ENCODE measurements at regions of chr13 and their contacts with region 1.

Region 1: GRCh38 chr13:41652727-41653361 is 195.5 kb downstream of the RGCC start:
- DNase-seq: no peak
- ATAC-seq: peak in 1 of 2 donors; percentile 60

Region 2: DNA sequence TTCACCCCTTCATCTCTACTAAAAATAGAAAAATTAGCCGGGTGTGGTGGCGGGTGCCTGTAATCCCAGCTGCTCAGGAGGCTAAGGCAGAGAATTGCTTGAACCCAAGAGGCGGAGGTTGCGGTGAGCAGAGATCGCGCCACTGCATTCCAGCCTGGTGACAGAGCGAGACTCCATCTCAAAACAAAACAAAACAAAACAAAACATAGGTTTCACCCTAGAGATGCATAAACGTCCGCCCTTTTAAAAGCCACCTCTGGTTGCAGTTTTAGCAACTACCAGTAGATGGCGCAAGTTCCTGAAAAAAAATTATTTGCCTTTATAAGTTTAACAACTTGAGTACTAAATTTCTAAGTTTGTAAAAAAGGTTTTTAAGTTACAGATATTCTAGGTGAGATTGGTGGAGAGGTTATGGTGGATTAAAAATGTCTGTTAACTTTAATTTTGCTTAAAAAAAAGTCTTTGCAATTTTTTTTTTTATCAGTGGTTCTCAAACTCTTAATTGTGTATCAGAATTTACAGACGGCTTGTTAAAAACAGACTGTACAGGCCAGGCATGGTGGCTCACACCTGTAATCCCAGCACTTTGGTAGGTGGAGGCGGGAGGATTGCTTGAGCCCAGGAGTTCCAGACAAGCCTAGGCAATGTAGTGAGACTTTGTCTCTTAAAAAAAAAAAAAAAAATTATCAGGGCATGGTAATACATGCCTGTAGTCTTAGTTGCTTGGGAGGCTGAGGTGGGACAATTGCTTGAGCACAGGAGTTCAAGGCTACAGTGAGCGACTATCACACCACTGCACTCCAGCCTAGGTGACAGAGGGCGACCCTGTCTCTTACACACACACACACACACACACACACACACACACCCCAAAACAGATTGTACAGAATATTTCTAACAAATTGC is 299.7 kb before region 1 on chr13:
- intact Hi-C with region 1: loop called in 1 of 2 experiments (anchors 10 kb)
- DNase-seq: no peak
- ATAC-seq: peak; percentile 36 to 37

Region 3: DNA sequence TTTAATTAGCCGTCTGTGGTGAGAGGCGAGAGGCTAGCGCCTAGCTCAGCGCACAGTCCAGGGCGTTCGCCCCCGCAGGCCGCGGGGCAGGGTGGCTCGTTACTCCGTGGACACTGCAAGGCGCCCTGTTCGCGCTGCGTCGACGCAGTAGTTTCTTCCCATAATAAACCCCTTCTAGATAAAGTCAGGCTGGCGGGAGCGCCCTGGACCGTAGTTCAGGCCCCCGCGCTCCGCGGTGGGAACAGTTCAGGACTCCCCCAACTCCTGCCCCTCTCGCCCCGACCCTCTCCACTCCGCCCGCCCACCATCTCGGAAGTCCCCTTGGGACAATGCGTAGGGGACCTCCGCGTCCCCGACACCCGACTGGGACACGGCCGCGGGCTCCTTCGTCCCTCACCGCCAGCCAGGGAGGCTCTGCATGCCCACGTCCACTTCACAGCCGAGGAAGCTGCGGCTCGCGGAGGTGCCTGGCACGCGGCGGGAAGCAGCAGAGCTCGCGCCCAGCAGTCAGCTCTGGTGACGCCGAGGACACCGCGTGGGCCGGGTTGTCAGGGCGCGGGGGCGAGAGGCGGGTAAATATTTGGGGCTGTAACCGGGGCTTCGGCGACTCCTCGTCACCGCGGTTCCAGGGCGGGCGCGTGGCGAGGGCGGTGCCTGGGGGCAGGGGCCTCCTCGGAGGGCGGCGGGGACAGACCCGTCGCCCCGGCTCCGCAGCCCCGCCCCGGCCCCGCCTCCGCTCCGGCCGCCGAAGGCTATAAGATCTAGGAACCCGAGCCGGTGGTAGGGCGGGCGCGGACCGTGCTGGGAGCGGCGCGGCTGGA is 195.9 kb before region 1 on chr13 and contains the start of gene RGCC:
- intact Hi-C with region 1: loop called in 1 of 2 experiments (anchors 5 kb)
- DNase-seq: peak; percentile 83
- ATAC-seq: peak; percentile 87 to 93
- total RNA-seq, gene RGCC: 40.8 to 43.2 TPM

Measured in left cardiac atrium (tissue), 4 donors.